ENCODE measurements at regions of chr18 and their contacts with region 1.

Region 1: GRCh38 chr18:10519999-10520935 is 5.6 kb upstream of the NAPG start:
- DNase-seq: peak; percentile 88
- ATAC-seq: peak; percentile 83

Region 2: GRCh38 chr18:9971313-9971920 is 548.9 kb before region 1 on chr18:
- intact Hi-C with region 1: loop called (anchors 1 kb)
- DNase-seq: no peak
- ATAC-seq: peak; percentile 69

Region 3: GRCh38 chr18:10006311-10006893 is 513.9 kb before region 1 on chr18:
- intact Hi-C with region 1: loop called (anchors 2 kb)
- DNase-seq: no peak
- ATAC-seq: peak; percentile 21

Region 4: GRCh38 chr18:10242936-10243680 is 277.2 kb before region 1 on chr18:
- intact Hi-C with region 1: loop called (anchors 10 kb)
- DNase-seq: no peak
- ATAC-seq: no peak

Region 5: GRCh38 chr18:10320791-10321190 is 199.5 kb before region 1 on chr18:
- intact Hi-C with region 1: no loop called
- DNase-seq: no peak
- ATAC-seq: no peak

Region 6: DNA sequence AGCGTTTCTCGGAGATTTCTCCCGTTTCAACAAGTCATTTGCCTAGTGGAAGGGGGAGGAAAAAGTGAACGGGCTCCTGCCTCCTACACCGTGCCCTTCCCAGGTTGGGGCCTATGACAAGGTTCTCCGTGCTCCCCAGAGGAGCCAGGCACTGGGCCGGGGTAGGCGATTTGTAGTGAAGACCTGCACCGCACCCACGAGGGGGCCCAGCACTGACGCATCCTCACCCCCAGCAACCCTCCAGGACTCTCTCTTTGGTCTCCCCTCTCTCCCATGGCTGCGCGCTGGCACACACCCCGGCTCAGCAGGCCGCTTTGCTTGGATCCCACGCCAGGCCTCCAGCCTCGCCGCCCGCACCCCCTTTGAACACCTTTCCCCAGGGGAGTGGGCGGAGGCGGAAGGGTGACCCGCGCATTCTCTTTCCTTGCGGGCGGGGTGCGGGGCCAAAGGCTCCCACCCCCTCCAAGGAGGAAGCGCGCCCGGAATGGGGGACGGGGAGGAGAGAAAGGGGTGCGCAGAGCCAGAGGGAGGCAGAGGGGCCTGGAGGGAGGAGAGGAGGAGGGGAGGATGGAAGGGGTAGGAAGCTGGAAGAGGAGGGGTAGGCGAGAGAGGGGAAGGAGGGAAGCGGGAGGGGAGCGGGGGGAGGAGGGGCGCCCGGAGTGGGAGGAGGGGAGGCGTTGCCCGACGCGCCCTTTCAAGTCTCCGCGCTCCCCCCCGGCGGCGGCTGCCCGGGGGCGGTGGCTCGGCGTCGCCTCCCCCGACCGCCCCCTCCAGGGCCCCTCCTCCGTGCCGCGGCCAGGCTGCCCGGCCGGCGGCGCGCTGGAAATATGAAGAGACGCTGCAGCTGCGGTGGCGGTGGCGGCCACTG is 66.2 kb before region 1 on chr18 and contains the start of gene APCDD1:
- intact Hi-C with region 1: loop called (anchors 5 kb)
- DNase-seq: peak; percentile 82
- ATAC-seq: peak; percentile 88
- total RNA-seq, gene APCDD1: 34.5 TPM

Region 7: DNA sequence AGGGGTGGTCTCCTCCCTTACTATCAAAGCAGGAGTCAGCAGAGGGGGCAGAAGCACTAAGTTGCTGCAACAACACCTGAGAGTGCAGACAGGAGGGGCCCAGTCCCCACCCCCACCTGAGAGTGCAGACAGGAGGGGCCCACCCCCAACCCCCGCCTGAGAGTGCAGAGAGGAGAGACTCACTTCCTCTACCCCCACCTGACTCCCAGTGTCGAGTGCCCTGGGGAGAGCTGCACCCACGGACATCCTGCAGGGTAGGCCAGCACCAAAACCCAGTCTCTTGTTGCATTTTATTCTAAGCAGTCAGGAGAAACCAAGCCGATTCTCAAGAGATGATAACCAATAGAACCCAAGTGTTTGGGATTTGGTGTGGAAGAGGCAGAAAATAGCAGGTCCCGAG is 83.9 kb after region 1 on chr18:
- intact Hi-C with region 1: no loop called
- DNase-seq: no peak
- ATAC-seq: no peak